Left colon (tissue), 2 donors: ENCODE measurements at regions of chr15 and their contacts with region 1.

Region 1: GRCh38 chr15:80989518-80990478 is at the start of gene MESD:
- DNase-seq: peak; percentile 97 to 100
- ATAC-seq: peak; percentile 98
- total RNA-seq, gene MESD: 21.2 TPM

Region 2: GRCh38 chr15:81106560-81106959 is 116.8 kb after region 1 on chr15:
- intact Hi-C with region 1: loop called in 1 of 2 experiments (anchors 10 kb)
- DNase-seq: peak in 1 of 2 donors; percentile 37
- ATAC-seq: peak; percentile 67